ENCODE measurements at regions of chr9 and their contacts with region 1.

Region 1: DNA sequence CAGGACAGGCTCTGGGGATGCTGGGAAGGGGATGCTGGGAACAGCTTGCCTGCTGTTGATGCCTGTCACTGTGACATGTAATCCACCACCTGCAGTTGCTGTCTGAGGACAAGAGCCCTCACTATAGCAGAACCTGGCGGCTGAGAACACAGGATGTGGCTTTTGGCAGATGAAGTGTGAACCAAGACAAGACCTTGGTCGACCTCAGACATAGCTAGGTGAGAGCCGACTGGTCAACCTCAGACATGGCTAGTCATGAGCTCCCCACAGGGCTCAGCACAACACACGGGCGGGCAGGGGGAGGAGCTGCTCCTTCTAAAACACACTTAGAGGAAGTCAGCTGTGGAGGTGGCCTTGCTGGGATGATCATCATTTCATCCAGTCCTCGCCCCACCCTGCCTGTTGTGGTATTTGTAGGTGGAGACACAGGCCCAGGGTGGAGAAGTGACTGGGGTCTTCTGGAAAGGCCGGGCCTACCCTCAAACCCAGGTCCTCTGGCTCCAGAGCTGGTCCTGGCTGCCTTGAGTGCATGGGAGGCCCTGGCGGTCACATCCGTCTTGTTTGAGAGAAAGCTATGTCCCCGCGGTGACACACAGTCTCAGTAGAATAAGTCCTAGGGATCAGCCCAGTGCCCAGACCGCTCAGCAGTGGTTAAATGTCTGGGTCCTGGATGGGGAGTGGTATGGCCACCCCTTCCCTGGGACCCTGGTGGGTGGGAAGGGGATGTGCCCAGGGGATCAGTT is 6.1 kb downstream of the SUSD3 start:
- DNase-seq: peak; percentile 74 to 97 (median 86)
- ATAC-seq: peak; percentile 87
- H3K4me3 ChIP-seq: peak overlapping the region; percentile 45
- H3K4me3 Mint-ChIP-seq: peak overlapping the region; percentile 91
- H3K27ac ChIP-seq: peak overlapping the region; percentile 83 to 90
- H3K27ac Mint-ChIP-seq: peak overlapping the region; percentile 100
- H3K4me1 ChIP-seq: peaks cover 80% of the 10 kb centered on the region
- H3K4me1 Mint-ChIP-seq: peaks cover 96% of the 10 kb centered on the region
- H3K27me3 ChIP-seq: no peaks in the 10 kb centered on the region
- H3K27me3 Mint-ChIP-seq: no peaks in the 10 kb centered on the region
- CTCF ChIP-seq: no peak

Region 2: GRCh38 chr9:93013856-93014582 is 50.5 kb before region 1 on chr9:
- CTCF ChIA-PET with region 1: interaction called, 5 read pairs
- POLR2A ChIA-PET with region 1: interaction called, 13 read pairs
- intact Hi-C with region 1: no loop called
- DNase-seq: peak in 1 of 14 experiments; percentile 28
- ATAC-seq: no peak
- H3K4me3 ChIP-seq: no peak overlapping the region
- H3K4me3 Mint-ChIP-seq: no peak overlapping the region
- H3K27ac ChIP-seq: no peak overlapping the region
- H3K27ac Mint-ChIP-seq: peak overlapping the region; percentile 58
- H3K4me1 ChIP-seq: peaks cover 16% of the 10 kb centered on the region
- H3K4me1 Mint-ChIP-seq: peaks cover 14% of the 10 kb centered on the region
- H3K27me3 ChIP-seq: no peaks in the 10 kb centered on the region
- H3K27me3 Mint-ChIP-seq: no peaks in the 10 kb centered on the region
- CTCF ChIP-seq: no peak

Region 3: GRCh38 chr9:93041108-93041802 is 23.3 kb before region 1 on chr9:
- CTCF ChIA-PET with region 1: no interaction called
- POLR2A ChIA-PET with region 1: interaction called, 43 read pairs
- intact Hi-C with region 1: loop called in 1 of 2 experiments (anchors 2 kb)
- DNase-seq: no peak
- ATAC-seq: no peak
- H3K4me3 ChIP-seq: no peak overlapping the region
- H3K4me3 Mint-ChIP-seq: peak overlapping the region; percentile 7
- H3K27ac ChIP-seq: peak overlapping the region in 1 of 2 donors; percentile 57
- H3K27ac Mint-ChIP-seq: peak overlapping the region; percentile 85
- H3K4me1 ChIP-seq: peaks cover 65% of the 10 kb centered on the region
- H3K4me1 Mint-ChIP-seq: peaks cover 73% of the 10 kb centered on the region
- H3K27me3 ChIP-seq: no peaks in the 10 kb centered on the region
- H3K27me3 Mint-ChIP-seq: no peaks in the 10 kb centered on the region
- CTCF ChIP-seq: no peak

Region 4: GRCh38 chr9:93082841-93083411 is 18.4 kb after region 1 on chr9:
- CTCF ChIA-PET with region 1: interaction called, 3 read pairs
- POLR2A ChIA-PET with region 1: interaction called, 19 read pairs
- intact Hi-C with region 1: no loop called
- DNase-seq: peak in 4 of 14 experiments; percentile 19 to 32 (median 24)
- ATAC-seq: peak; percentile 32
- H3K4me3 ChIP-seq: no peak overlapping the region
- H3K4me3 Mint-ChIP-seq: no peak overlapping the region
- H3K27ac ChIP-seq: peak overlapping the region; percentile 54 to 80
- H3K27ac Mint-ChIP-seq: peak overlapping the region; percentile 97
- H3K4me1 ChIP-seq: peaks cover 34% of the 10 kb centered on the region
- H3K4me1 Mint-ChIP-seq: peaks cover 24% of the 10 kb centered on the region
- H3K27me3 ChIP-seq: no peaks in the 10 kb centered on the region
- H3K27me3 Mint-ChIP-seq: no peaks in the 10 kb centered on the region
- CTCF ChIP-seq: no peak

Region 5: GRCh38 chr9:93134015-93134739 is 69.6 kb after region 1 on chr9 and contains the start of gene NINJ1:
- CTCF ChIA-PET with region 1: no interaction called
- POLR2A ChIA-PET with region 1: interaction called, 16 read pairs
- intact Hi-C with region 1: no loop called
- DNase-seq: peak; percentile 40 to 98 (median 73)
- ATAC-seq: peak; percentile 83
- H3K4me3 ChIP-seq: peak within 1 kb of the TSS; percentile 86
- H3K4me3 Mint-ChIP-seq: peak within 1 kb of the TSS; percentile 96
- H3K27ac ChIP-seq: peak within 1 kb of the TSS; percentile 91 to 96
- H3K27ac Mint-ChIP-seq: peak within 1 kb of the TSS; percentile 94
- H3K4me1 ChIP-seq: peaks cover 79% of the 10 kb centered on the region
- H3K4me1 Mint-ChIP-seq: peaks cover 77% of the 10 kb centered on the region
- H3K27me3 ChIP-seq: no peaks in the 10 kb centered on the region
- H3K27me3 Mint-ChIP-seq: no peaks in the 10 kb centered on the region
- CTCF ChIP-seq: no peak
- total RNA-seq, gene NINJ1: 87.8 to 87.9 TPM

Region 6: GRCh38 chr9:93223260-93224180 is 159.0 kb after region 1 on chr9:
- CTCF ChIA-PET with region 1: no interaction called
- POLR2A ChIA-PET with region 1: no interaction called
- intact Hi-C with region 1: no loop called
- DNase-seq: no peak
- ATAC-seq: no peak
- H3K4me3 ChIP-seq: no peak overlapping the region
- H3K4me3 Mint-ChIP-seq: no peak overlapping the region
- H3K27ac ChIP-seq: no peak overlapping the region
- H3K27ac Mint-ChIP-seq: no peak overlapping the region
- H3K4me1 ChIP-seq: no peaks in the 10 kb centered on the region
- H3K4me1 Mint-ChIP-seq: no peaks in the 10 kb centered on the region
- H3K27me3 ChIP-seq: no peaks in the 10 kb centered on the region
- H3K27me3 Mint-ChIP-seq: no peaks in the 10 kb centered on the region
- CTCF ChIP-seq: no peak

Region 7: DNA sequence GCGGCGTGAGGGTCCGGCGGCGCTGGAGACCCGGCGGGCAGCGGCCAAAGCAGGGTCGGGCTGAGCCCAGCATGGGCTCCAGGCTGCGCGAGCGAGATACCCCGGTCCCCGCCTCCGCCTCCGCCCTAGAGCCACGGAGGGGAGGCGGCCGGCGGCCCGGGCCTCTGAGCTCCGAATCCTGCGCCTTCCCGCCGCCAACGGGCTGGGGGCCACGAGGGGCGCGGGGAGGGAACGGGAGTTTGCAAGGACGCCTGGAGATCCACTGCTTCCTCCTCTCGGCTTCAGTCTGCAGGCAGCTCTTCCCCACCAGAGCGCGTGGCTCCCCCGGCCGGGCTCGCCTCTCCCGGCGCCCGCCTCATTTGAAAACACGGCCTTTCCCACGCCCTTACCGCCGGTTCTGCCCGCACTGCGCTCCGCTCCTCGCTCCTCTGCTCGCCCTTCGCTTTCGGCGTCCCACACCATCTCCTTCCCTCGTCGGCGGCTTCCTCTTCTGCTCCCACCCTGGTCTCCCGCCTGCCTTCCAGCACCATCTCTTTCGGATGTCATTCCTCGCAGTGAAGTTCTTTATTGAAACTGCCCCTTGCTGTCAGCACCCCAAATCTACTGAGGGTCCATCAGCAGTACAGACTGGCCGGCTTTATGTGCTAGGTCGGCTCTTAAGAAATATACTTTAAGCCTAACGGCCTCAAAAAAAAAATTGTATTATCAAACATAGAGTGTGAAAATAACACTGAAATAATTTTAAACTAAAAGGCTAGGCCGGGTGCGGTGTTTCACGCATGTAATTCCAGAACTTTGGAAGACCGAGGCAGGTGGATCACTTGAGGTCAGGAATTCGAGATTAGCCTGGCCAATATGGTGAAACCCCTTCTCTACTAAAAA is 281.9 kb after region 1 on chr9:
- CTCF ChIA-PET with region 1: no interaction called
- POLR2A ChIA-PET with region 1: no interaction called
- intact Hi-C with region 1: no loop called
- DNase-seq: peak in 1 of 14 experiments; percentile 19
- ATAC-seq: no peak
- H3K4me3 ChIP-seq: no peak overlapping the region
- H3K4me3 Mint-ChIP-seq: peak overlapping the region; percentile 62
- H3K27ac ChIP-seq: no peak overlapping the region
- H3K27ac Mint-ChIP-seq: no peak overlapping the region
- H3K4me1 ChIP-seq: peaks cover 9% of the 10 kb centered on the region
- H3K4me1 Mint-ChIP-seq: peaks cover 5% of the 10 kb centered on the region
- H3K27me3 ChIP-seq: peaks cover 21 to 22% of the 10 kb centered on the region in 2 experiments
- H3K27me3 Mint-ChIP-seq: peaks cover 67% of the 10 kb centered on the region
- CTCF ChIP-seq: no peak

Measured in CD4-positive, alpha-beta T cell (primary cell).